ENCODE measurements at regions of chr3 and their contacts with region 1.

Region 1: DNA sequence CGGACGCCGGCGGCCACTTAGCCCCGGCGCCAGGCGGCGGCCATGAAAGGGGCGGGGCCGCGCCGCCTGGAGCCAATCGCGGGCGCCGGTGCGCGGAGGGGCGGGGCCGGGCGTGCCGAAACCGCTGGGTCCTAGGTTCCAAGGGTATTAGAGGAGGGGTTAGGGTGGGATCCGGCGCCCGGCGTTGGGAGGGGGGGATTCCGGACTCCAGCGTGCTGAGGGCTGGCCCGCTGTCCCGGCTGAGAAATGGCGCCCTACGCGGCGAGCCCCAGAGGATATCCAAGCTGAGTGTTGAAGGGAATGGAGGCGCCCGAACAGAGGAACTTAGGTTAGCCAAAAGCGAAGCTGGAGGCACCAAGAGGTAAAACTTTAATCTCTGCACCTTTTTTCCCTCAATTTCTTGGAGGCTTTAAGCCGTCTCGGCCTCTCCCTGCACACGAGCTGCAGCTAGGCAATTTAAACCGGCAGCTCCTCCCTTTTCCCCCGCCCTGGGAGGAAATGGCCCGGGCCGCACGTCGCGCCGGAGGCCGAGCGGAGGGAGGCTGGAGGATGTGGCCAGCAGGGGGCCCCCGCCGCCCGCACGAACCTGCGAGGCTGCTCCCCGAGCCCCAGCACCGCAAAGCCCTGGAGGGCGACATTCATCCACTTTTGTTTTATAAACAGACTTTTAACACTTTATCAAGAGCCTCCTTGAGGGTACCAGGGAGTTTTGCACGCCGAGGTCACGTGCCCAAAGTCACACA is at the start of gene XXYLT1:
- DNase-seq: peak; percentile 87 to 92 (median 89)
- H3K4me3 ChIP-seq: peak within 1 kb of the TSS; percentile 82 to 90
- H3K4me3 Mint-ChIP-seq: peak within 1 kb of the TSS; percentile 85 to 93 (median 88)
- H3K27ac ChIP-seq: peak within 1 kb of the TSS; percentile 55
- H3K27ac Mint-ChIP-seq: peak within 1 kb of the TSS; percentile 77 to 94 (median 93)
- H3K4me1 ChIP-seq: peaks cover 25% of the 10 kb centered on the region
- H3K4me1 Mint-ChIP-seq: peaks cover 10 to 29% (median 23%) of the 10 kb centered on the region in 4 donors
- H3K27me3 ChIP-seq: no peaks in the 10 kb centered on the region
- H3K27me3 Mint-ChIP-seq: no peaks in the 10 kb centered on the region
- total RNA-seq, gene XXYLT1: 3.9 to 4.4 TPM

Region 2: DNA sequence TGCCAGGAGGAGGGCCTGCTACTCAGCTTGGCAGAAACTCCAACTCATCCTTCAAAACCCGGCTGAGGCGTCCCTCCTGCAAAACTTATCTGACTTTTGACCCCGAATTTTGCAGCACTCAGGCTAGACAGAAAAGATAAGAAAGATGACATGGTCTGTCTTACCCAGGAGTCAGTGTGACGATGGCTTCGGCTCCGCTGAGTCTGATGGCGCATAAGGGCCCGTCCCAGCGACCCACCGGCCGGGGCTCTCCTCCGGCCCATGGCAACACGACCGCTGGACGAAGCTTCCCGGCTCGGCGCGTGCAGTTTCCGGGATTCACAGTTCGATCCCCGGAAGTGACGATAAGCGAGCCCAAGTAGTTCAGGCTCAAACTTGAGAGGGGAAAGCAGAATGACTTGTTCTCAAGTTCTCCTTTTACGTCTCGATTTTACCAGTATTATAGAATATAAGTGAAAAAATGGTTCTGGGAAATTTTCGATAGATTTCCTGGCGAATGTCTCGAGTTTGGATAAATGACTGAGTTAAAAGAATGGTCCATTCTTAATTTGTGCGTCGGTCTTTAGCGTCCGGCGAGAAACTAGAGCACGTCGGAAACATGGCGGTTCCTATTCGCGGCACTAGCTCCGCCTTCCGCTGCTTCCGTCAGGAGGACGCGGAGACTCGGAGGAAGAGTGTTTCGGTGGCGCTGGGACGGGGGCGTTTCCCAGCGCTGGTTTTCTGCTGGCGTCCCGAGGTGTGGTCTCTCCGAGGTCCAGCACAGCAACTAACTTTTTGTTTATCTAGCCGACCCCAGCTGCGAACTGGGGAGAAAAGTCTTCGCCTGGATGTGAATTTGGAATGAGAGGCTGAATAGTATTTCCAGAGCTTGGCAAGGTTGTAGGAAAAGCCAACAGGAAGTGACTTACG is 599.1 kb before region 1 on chr3 and contains the start of gene LSG1:
- CTCF ChIA-PET with region 1: interaction called, 30 read pairs
- POLR2A ChIA-PET with region 1: interaction called, 17 read pairs
- intact Hi-C with region 1: no loop called
- DNase-seq: peak; percentile 87 to 90 (median 89)
- H3K4me3 ChIP-seq: peak within 1 kb of the TSS; percentile 85 to 88
- H3K4me3 Mint-ChIP-seq: peak within 1 kb of the TSS; percentile 97 to 100 (median 99)
- H3K27ac ChIP-seq: peak within 1 kb of the TSS; percentile 95
- H3K27ac Mint-ChIP-seq: peak within 1 kb of the TSS; percentile 98 to 99 (median 99)
- H3K4me1 ChIP-seq: peaks cover 32% of the 10 kb centered on the region
- H3K4me1 Mint-ChIP-seq: peaks cover 26 to 52% (median 38%) of the 10 kb centered on the region in 4 donors
- H3K27me3 ChIP-seq: no peaks in the 10 kb centered on the region
- H3K27me3 Mint-ChIP-seq: peaks cover 0 to 4% of the 10 kb centered on the region in 2 donors
- total RNA-seq, gene LSG1: 48.4 to 49.5 TPM

Region 3: GRCh38 chr3:195117978-195118581 is 153.2 kb before region 1 on chr3:
- CTCF ChIA-PET with region 1: no interaction called
- POLR2A ChIA-PET with region 1: no interaction called
- intact Hi-C with region 1: no loop called
- DNase-seq: no peak
- H3K4me3 ChIP-seq: no peak overlapping the region
- H3K4me3 Mint-ChIP-seq: no peak overlapping the region
- H3K27ac ChIP-seq: no peak overlapping the region
- H3K27ac Mint-ChIP-seq: peak overlapping the region in 1 of 7 donors; percentile 64
- H3K4me1 ChIP-seq: no peaks in the 10 kb centered on the region
- H3K4me1 Mint-ChIP-seq: peaks cover 0 to 6% (median 0%) of the 10 kb centered on the region in 4 donors
- H3K27me3 ChIP-seq: no peaks in the 10 kb centered on the region
- H3K27me3 Mint-ChIP-seq: no peaks in the 10 kb centered on the region

Region 4: GRCh38 chr3:195154793-195155535 is 116.3 kb before region 1 on chr3:
- CTCF ChIA-PET with region 1: no interaction called
- POLR2A ChIA-PET with region 1: no interaction called
- intact Hi-C with region 1: no loop called
- DNase-seq: no peak
- H3K4me3 ChIP-seq: no peak overlapping the region
- H3K4me3 Mint-ChIP-seq: no peak overlapping the region
- H3K27ac ChIP-seq: no peak overlapping the region
- H3K27ac Mint-ChIP-seq: peak overlapping the region in 2 of 7 donors; percentile 25 to 85
- H3K4me1 ChIP-seq: peaks cover 16% of the 10 kb centered on the region
- H3K4me1 Mint-ChIP-seq: peaks cover 2 to 10% (median 7%) of the 10 kb centered on the region in 4 donors
- H3K27me3 ChIP-seq: no peaks in the 10 kb centered on the region
- H3K27me3 Mint-ChIP-seq: no peaks in the 10 kb centered on the region

Region 5: GRCh38 chr3:195319060-195319459 is 47.8 kb after region 1 on chr3:
- CTCF ChIA-PET with region 1: interaction called, 10 read pairs
- POLR2A ChIA-PET with region 1: no interaction called
- intact Hi-C with region 1: no loop called
- DNase-seq: no peak
- H3K4me3 ChIP-seq: no peak overlapping the region
- H3K4me3 Mint-ChIP-seq: no peak overlapping the region
- H3K27ac ChIP-seq: no peak overlapping the region
- H3K27ac Mint-ChIP-seq: no peak overlapping the region
- H3K4me1 ChIP-seq: no peaks in the 10 kb centered on the region
- H3K4me1 Mint-ChIP-seq: peaks cover 0 to 10% (median 6%) of the 10 kb centered on the region in 4 donors
- H3K27me3 ChIP-seq: no peaks in the 10 kb centered on the region
- H3K27me3 Mint-ChIP-seq: no peaks in the 10 kb centered on the region

Region 6: DNA sequence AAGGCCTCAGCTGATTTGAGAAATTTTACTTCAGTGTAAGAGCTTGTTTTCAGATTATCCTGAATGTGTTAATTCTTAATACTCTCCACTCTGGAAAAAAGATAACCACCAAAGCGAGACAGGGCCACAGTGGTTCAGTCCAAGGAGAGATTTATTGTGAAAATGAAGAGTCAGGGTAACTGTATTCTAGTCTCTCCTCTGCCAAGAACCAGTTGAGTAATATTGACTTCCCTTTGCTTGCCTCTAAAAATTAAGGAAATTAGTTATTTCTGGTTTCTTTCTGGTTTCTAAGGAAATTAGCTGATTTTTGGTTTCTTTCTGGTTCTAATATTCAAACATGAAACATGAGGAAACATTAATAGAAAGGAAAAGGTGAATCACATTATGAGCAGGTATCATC is 236.9 kb after region 1 on chr3:
- CTCF ChIA-PET with region 1: interaction called, 10 read pairs
- POLR2A ChIA-PET with region 1: interaction called, 3 read pairs
- intact Hi-C with region 1: no loop called
- DNase-seq: no peak
- H3K4me3 ChIP-seq: no peak overlapping the region
- H3K4me3 Mint-ChIP-seq: no peak overlapping the region
- H3K27ac ChIP-seq: no peak overlapping the region
- H3K27ac Mint-ChIP-seq: peak overlapping the region; percentile 5 to 78 (median 53)
- H3K4me1 ChIP-seq: no peaks in the 10 kb centered on the region
- H3K4me1 Mint-ChIP-seq: peaks cover 4 to 24% (median 13%) of the 10 kb centered on the region in 4 donors
- H3K27me3 ChIP-seq: no peaks in the 10 kb centered on the region
- H3K27me3 Mint-ChIP-seq: no peaks in the 10 kb centered on the region

Region 7: GRCh38 chr3:195542698-195543499 is 271.6 kb after region 1 on chr3 and contains the start of gene PPP1R2:
- CTCF ChIA-PET with region 1: interaction called, 38 read pairs
- POLR2A ChIA-PET with region 1: interaction called, 31 read pairs
- intact Hi-C with region 1: no loop called
- DNase-seq: peak; percentile 88 to 94 (median 92)
- H3K4me3 ChIP-seq: peak within 1 kb of the TSS; percentile 66 to 82
- H3K4me3 Mint-ChIP-seq: peak within 1 kb of the TSS; percentile 88 to 96 (median 91)
- H3K27ac ChIP-seq: peak within 1 kb of the TSS; percentile 98
- H3K27ac Mint-ChIP-seq: peak within 1 kb of the TSS; percentile 92 to 97 (median 95)
- H3K4me1 ChIP-seq: peaks cover 77% of the 10 kb centered on the region
- H3K4me1 Mint-ChIP-seq: peaks cover 47 to 90% (median 66%) of the 10 kb centered on the region in 4 donors
- H3K27me3 ChIP-seq: no peaks in the 10 kb centered on the region
- H3K27me3 Mint-ChIP-seq: no peaks in the 10 kb centered on the region
- total RNA-seq, gene PPP1R2: 136 to 137 TPM

Region 8: DNA sequence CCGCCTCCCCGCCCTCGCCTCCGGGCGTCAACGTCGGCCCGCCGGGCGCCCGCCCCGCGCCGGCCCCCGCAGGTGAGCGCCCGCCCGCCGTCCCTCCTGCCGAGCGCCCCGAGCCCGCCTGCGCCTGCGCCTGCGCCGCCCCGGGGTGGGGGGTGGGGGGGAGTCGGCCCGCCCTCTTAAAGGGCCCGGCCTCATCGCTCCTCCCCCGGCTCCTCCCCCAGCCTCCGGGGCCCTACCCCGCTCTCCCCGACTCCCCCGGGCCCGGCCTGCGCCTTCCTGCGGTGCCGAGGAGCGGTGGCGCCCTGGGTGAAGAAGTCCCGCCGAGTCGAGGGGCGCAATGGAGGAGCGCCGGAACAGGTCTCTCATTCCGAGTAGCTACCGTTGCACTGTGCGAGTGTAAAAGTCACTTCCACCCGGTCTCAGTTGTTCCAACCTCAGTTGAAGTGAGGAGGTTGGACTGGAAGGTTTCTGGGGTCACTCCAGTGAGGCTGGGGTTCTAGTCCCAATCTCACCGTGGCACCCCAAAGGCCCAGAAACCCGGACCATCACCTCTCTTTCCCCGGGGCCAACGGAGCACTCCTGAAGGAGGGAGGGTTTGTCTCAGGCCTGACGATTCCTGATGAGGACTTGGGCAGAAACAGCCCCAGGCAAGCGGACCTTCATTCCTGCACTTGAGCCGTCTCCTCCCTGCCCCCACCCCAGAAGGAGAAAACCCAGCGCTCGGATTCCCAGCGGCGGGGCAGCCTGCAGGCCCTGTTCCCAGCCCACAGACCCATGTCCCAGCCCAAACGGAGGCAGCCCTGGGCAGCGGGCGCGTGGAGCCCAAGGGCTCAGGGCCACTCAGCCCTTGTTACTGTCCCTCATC is 638.6 kb after region 1 on chr3:
- CTCF ChIA-PET with region 1: interaction called, 4 read pairs
- POLR2A ChIA-PET with region 1: interaction called, 4 read pairs
- intact Hi-C with region 1: loop called (anchors 2 kb)
- DNase-seq: peak; percentile 86 to 88 (median 87)
- H3K4me3 ChIP-seq: peak overlapping the region; percentile 42 to 47
- H3K4me3 Mint-ChIP-seq: peak overlapping the region; percentile 57 to 79 (median 65)
- H3K27ac ChIP-seq: peak overlapping the region; percentile 58
- H3K27ac Mint-ChIP-seq: peak overlapping the region in 6 of 7 donors; percentile 46 to 88 (median 76)
- H3K4me1 ChIP-seq: peaks cover 43% of the 10 kb centered on the region
- H3K4me1 Mint-ChIP-seq: peaks cover 22 to 46% (median 33%) of the 10 kb centered on the region in 4 donors
- H3K27me3 ChIP-seq: no peaks in the 10 kb centered on the region
- H3K27me3 Mint-ChIP-seq: no peaks in the 10 kb centered on the region

Measured in CD4-positive, alpha-beta memory T cell (primary cell).